Panc1 (cell line): ENCODE measurements at regions of chr5 and their contacts with region 1.

Region 1: DNA sequence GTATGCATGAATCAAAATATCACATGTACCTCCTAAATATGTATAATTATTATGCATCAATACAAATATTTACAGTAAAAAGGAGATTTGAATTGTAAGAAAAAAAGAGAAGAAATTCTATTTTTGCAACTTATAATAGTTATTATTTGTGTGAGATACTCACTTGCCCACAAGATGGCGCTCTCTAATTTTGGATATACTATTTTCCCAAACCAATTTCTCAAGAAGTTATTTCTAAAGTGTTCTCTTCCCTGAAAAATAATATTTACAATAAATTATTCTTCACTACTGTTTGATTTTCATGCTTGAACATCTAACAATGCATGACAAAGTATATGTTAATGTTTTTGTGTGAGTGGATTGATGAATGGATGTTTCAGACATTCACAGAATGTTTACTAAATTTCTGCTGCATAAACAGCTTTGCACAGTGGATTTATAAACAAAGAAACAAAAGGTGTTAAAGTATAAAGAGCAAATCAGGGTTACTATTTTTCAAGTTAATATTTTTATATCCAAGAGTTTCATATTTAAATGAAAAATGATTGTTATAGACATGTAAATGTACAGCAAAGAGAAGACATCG is 503.4 kb downstream of the PDE4D start:
- DNase-seq: peak; percentile 4
- ATAC-seq: no peak
- H3K4me3 ChIP-seq: no peak overlapping the region
- H3K27ac ChIP-seq: no peak overlapping the region
- H3K4me1 ChIP-seq: no peaks in the 10 kb centered on the region
- H3K27me3 ChIP-seq: no peaks in the 10 kb centered on the region
- CTCF ChIP-seq: peak; percentile 52; the same call in 1 of the 2 replicates

Region 2: DNA sequence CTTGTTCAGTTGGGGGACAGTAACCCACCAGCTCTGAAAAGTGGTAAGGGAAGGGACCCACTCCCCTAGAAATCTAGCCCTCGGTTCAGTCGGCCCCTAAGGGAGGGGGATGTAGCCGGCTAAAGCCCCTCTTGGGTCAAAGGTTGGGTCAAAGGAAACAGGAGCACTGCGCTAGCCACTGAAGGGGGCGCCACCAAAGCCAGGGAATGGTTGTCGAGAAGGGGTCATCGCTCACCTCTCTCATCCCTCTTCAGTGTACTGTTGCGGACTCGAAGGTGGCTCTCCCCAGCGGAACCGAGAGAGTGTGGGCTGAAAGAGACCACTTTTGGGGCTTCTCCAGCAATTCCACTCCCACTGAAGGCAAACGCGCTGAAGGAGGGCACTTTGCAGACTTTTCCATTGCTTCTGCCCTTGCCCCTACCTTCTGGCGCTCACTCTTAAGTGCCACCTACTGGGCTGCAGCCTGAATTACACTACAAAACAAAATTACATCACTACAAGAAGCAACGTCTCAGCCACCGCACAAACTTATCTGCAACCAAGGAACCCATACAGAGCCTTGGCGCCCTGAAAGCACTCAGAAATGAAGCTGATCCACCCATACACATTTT is 106.5 kb after region 1 on chr5:
- CTCF ChIA-PET with region 1: no interaction called
- POLR2A ChIA-PET with region 1: no interaction called
- in situ Hi-C with region 1: no loop called
- intact Hi-C with region 1: loop called (anchors 5 kb)
- DNase-seq: no peak
- ATAC-seq: no peak
- H3K4me3 ChIP-seq: no peak overlapping the region
- H3K27ac ChIP-seq: no peak overlapping the region
- H3K4me1 ChIP-seq: no peaks in the 10 kb centered on the region
- H3K27me3 ChIP-seq: no peaks in the 10 kb centered on the region
- CTCF ChIP-seq: peak; percentile 72